CD4-positive, alpha-beta T cell (primary cell): ENCODE measurements at regions of chr19 and their contacts with region 1.

Region 1: DNA sequence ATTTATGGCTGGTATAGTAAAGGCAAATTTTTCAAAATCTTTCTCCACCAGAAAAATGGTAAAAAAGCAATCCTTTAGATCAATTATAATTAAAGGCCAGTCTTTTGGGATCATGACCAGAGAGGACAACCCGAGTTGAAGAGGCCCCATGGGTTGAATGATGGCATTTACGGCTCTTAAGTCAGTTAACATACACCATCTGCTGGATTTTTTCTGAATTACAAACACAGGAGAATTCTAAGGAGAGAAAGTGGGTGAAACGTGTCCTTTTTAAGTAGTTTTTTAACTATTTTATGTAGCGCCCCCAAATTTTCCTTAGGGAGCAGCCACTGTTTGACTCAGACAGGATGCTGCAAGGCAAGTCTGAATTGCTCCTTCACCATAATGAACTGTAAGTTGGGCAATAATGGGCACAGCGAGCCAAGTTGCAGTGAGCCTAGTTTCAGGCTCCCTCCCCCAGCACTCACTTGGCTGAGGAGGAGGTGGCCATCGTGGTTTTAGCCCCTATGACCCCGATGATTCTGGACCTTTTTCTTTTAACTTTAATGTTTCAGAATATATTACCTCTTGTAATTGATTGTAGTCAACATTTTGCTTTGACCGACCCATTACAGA is 13.6 kb upstream of the ZNF611 start:
- DNase-seq: peak in 4 of 14 experiments; percentile 26 to 74 (median 66)
- ATAC-seq: no peak
- H3K4me3 ChIP-seq: no peak overlapping the region
- H3K4me3 Mint-ChIP-seq: no peak overlapping the region
- H3K27ac ChIP-seq: no peak overlapping the region
- H3K27ac Mint-ChIP-seq: no peak overlapping the region
- H3K4me1 ChIP-seq: no peaks in the 10 kb centered on the region
- H3K4me1 Mint-ChIP-seq: peaks cover 8% of the 10 kb centered on the region
- H3K27me3 ChIP-seq: no peaks in the 10 kb centered on the region
- H3K27me3 Mint-ChIP-seq: no peaks in the 10 kb centered on the region
- CTCF ChIP-seq: peak; percentile 24

Region 2: GRCh38 chr19:52248241-52248640 is 500.2 kb before region 1 on chr19:
- CTCF ChIA-PET with region 1: interaction called, 5 read pairs
- POLR2A ChIA-PET with region 1: no interaction called
- intact Hi-C with region 1: loop called in 1 of 2 experiments (anchors 1 kb)
- DNase-seq: peak; percentile 39 to 76 (median 58)
- ATAC-seq: peak; percentile 59
- H3K4me3 ChIP-seq: no peak overlapping the region
- H3K4me3 Mint-ChIP-seq: no peak overlapping the region
- H3K27ac ChIP-seq: no peak overlapping the region
- H3K27ac Mint-ChIP-seq: no peak overlapping the region
- H3K4me1 ChIP-seq: no peaks in the 10 kb centered on the region
- H3K4me1 Mint-ChIP-seq: no peaks in the 10 kb centered on the region
- H3K27me3 ChIP-seq: no peaks in the 10 kb centered on the region
- H3K27me3 Mint-ChIP-seq: no peaks in the 10 kb centered on the region
- CTCF ChIP-seq: peak; percentile 52

Region 3: GRCh38 chr19:52343548-52343947 is 404.9 kb before region 1 on chr19:
- CTCF ChIA-PET with region 1: no interaction called
- POLR2A ChIA-PET with region 1: no interaction called
- intact Hi-C with region 1: loop called in 1 of 2 experiments (anchors 2 kb)
- DNase-seq: peak; percentile 9 to 76 (median 32)
- ATAC-seq: peak; percentile 70
- H3K4me3 ChIP-seq: no peak overlapping the region
- H3K4me3 Mint-ChIP-seq: no peak overlapping the region
- H3K27ac ChIP-seq: no peak overlapping the region
- H3K27ac Mint-ChIP-seq: no peak overlapping the region
- H3K4me1 ChIP-seq: no peaks in the 10 kb centered on the region
- H3K4me1 Mint-ChIP-seq: peaks cover 4% of the 10 kb centered on the region
- H3K27me3 ChIP-seq: no peaks in the 10 kb centered on the region
- H3K27me3 Mint-ChIP-seq: no peaks in the 10 kb centered on the region
- CTCF ChIP-seq: peak; percentile 63

Region 4: DNA sequence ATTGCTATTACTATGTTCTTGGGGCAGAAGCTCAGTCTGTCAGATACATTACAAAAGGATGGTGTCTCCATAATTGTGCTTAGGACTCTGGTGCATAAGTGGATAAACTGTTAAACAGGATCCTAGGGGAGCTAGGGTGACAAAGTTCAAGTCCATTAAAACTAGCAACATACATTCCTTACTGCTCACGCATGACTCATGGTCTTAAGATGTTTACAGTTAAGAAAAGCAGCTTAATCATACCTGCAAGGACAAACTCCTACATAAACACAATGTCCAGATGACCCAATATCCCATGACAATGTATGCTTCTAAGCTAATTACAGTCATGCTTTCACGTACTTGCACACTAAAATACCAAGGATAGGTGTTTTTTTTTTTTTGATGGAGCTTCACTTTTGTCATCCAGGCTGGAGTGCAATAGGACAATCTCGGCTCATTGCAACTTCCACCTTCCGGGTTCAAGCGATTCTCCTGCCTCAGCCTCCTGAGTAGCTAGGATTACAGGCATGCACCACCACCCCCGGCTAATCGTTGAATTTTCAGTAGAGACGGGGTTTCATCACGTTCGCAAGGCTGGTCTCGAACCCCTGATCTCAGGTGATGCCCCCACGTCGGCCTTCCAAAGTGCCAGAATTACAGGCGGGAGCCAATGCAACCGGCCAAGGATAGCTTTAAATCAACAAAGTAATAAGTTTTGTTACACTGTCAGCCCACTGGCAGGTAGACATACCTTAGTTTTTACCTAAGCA is 181.7 kb before region 1 on chr19:
- CTCF ChIA-PET with region 1: no interaction called
- POLR2A ChIA-PET with region 1: no interaction called
- intact Hi-C with region 1: no loop called
- DNase-seq: no peak
- ATAC-seq: no peak
- H3K4me3 ChIP-seq: no peak overlapping the region
- H3K4me3 Mint-ChIP-seq: no peak overlapping the region
- H3K27ac ChIP-seq: no peak overlapping the region
- H3K27ac Mint-ChIP-seq: no peak overlapping the region
- H3K4me1 ChIP-seq: peaks cover 20% of the 10 kb centered on the region
- H3K4me1 Mint-ChIP-seq: peaks cover 21% of the 10 kb centered on the region
- H3K27me3 ChIP-seq: no peaks in the 10 kb centered on the region
- H3K27me3 Mint-ChIP-seq: no peaks in the 10 kb centered on the region
- CTCF ChIP-seq: no peak

Region 5: DNA sequence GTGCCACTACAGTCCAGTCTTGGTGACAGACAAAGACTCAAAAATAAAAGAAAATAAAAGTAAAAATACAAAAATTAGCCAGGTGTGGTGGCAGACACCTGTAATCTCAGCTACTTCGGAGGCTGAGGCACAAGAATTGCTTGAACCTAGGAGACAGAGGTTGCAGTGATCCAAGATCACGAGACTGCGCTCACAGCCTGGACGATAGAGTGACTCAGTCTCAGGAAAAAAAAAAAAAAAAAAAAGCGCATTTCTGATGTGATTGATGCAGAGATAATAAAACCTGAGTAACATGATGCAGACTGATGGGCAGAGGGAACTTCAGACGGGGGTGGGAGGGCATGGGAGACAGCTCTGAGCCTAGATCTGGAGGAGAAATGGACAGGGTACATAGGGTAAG is 13.3 kb after region 1 on chr19:
- CTCF ChIA-PET with region 1: no interaction called
- POLR2A ChIA-PET with region 1: no interaction called
- intact Hi-C with region 1: no loop called
- DNase-seq: no peak
- ATAC-seq: no peak
- H3K4me3 ChIP-seq: no peak overlapping the region
- H3K4me3 Mint-ChIP-seq: no peak overlapping the region
- H3K27ac ChIP-seq: no peak overlapping the region
- H3K27ac Mint-ChIP-seq: no peak overlapping the region
- H3K4me1 ChIP-seq: no peaks in the 10 kb centered on the region
- H3K4me1 Mint-ChIP-seq: no peaks in the 10 kb centered on the region
- H3K27me3 ChIP-seq: no peaks in the 10 kb centered on the region
- H3K27me3 Mint-ChIP-seq: no peaks in the 10 kb centered on the region
- CTCF ChIP-seq: no peak